CD14-positive monocyte (primary cell): ENCODE measurements at regions of chr4 and their contacts with region 1.

Region 1: DNA sequence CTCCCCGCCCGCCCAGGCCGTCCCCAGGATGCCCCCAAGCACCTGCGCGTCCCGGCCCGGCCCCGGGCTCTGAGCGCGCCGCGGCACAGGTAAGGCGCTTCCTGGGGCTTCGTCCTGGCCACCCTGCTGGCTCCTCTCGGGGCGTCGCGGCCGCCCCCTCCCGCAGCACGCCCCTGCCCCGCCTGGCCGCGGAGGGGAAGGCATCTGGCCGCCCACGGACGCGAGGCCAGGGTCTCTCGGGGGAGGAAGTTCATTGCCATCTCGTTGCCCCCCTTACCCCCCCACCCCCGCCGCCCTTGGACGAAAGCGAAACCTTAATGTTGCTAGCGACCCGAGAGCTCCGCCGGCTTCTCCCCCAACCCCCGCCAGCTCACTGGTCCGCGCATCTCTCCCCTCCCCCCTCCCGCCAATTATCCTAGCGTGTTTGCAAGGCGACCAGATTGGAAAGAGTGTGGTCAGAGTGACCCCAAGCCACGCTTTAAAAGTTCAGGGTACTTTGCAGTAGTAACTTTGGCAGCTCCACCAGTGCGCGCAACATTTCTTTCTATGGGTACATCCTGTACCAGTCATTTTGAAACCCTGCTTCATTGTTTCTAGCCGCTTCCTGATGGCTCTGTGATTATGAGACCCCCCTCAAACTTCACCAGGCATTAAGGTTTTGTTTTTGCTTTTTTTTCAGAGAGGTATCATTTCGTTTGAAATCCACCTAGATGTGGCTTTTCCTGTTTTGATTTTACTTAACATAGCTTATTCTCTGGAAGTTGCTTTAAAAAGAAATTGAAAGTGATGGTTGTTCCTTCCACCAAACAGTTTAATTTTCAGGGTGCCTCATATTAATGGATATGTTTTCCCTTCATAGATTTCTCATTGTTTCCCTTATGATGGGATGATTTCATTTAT is 626 bp downstream of the TBC1D1 start:
- DNase-seq: peak; percentile 26 to 45 (median 33)
- H3K4me3 ChIP-seq: peak overlapping the region; percentile 63 to 99 (median 92)
- H3K4me3 Mint-ChIP-seq: peak overlapping the region; percentile 88 to 95
- H3K27ac ChIP-seq: peak overlapping the region; percentile 62 to 85
- H3K27ac Mint-ChIP-seq: peak overlapping the region; percentile 83 to 93 (median 90)
- H3K4me1 ChIP-seq: peaks cover 40 to 43% of the 10 kb centered on the region in 2 donors
- H3K4me1 Mint-ChIP-seq: peaks cover 45% of the 10 kb centered on the region
- H3K27me3 ChIP-seq: no peaks in the 10 kb centered on the region
- H3K27me3 Mint-ChIP-seq: peaks cover 7 to 10% (median 7%) of the 10 kb centered on the region in 3 donors
- CTCF ChIP-seq: no peak

Region 2: GRCh38 chr4:37826295-37827029 is 65.0 kb before region 1 on chr4 and contains the start of gene PGM2:
- intact Hi-C with region 1: loop called in 1 of 2 experiments (anchors 10 kb)
- DNase-seq: peak; percentile 65 to 73 (median 69)
- H3K4me3 ChIP-seq: peak within 1 kb of the TSS; percentile 53 to 99 (median 69)
- H3K4me3 Mint-ChIP-seq: peak within 1 kb of the TSS; percentile 98 to 100
- H3K27ac ChIP-seq: peak within 1 kb of the TSS; percentile 40 to 86
- H3K27ac Mint-ChIP-seq: peak within 1 kb of the TSS; percentile 87 to 98 (median 97)
- H3K4me1 ChIP-seq: peaks cover 23 to 33% of the 10 kb centered on the region in 2 donors
- H3K4me1 Mint-ChIP-seq: peaks cover 40% of the 10 kb centered on the region
- H3K27me3 ChIP-seq: no peaks in the 10 kb centered on the region
- H3K27me3 Mint-ChIP-seq: peaks cover 0 to 2% (median 0%) of the 10 kb centered on the region in 3 donors
- CTCF ChIP-seq: no peak
- polyA plus RNA-seq, gene PGM2: 17.8 to 48.6 (median 46.2) TPM

Region 3: DNA sequence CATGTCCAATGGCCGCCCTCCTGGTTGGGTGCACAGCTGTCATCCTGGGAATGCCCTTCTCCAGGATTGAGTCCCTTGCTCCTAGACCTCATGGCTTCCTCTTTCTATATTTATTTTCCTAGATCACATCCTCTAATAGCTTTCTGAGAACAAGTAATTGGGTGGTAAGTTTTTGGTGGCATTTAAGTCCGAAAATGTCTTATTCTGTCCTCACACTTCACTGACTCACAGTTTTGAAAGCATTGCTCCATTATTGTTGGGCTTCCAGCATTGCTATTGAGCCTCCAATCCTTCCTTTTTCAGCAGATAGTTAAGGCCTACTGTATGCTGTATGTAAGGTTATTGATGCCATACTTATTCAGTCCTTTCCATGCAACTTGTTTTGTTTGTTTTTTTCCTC is 39.1 kb before region 1 on chr4:
- intact Hi-C with region 1: loop called in 1 of 2 experiments (anchors 5 kb)
- DNase-seq: peak in 1 of 3 donors; percentile 39
- H3K4me3 ChIP-seq: no peak overlapping the region
- H3K4me3 Mint-ChIP-seq: no peak overlapping the region
- H3K27ac ChIP-seq: no peak overlapping the region
- H3K27ac Mint-ChIP-seq: peak overlapping the region in 5 of 7 donors; percentile 24 to 80 (median 46)
- H3K4me1 ChIP-seq: peaks cover 21 to 34% of the 10 kb centered on the region in 2 donors
- H3K4me1 Mint-ChIP-seq: peaks cover 37% of the 10 kb centered on the region
- H3K27me3 ChIP-seq: no peaks in the 10 kb centered on the region
- H3K27me3 Mint-ChIP-seq: no peaks in the 10 kb centered on the region
- CTCF ChIP-seq: no peak